ENCODE measurements at regions of chr4 and their contacts with region 1.

Region 1: DNA sequence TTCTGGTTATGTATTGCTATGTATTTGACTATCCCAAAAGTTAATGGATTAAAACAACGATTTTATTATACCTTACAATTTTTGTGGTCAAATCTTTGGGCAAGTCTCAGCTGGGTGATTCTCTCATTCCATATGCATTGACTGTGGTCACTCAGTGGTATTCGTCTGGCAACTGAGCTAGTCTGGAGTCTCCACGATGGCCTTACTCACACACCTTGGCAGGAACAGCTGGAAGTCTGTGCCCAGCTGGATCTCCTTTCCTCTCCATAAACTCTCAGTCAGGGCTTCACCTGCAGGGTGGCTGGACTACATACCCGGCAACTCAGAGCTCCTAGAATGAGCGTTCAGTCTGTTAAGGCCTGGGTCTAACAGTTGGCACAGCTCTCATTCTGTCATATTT is 141.1 kb upstream of the WDFY3 start:
- DNase-seq: no peak
- H3K4me3 ChIP-seq: no peak overlapping the region
- H3K27ac ChIP-seq: no peak overlapping the region
- H3K27me3 ChIP-seq: no peaks in the 10 kb centered on the region
- CTCF ChIP-seq: no peak

Region 2: GRCh38 chr4:85084380-85085094 is 23.0 kb before region 1 on chr4:
- CTCF ChIA-PET with region 1: interaction called, 11 read pairs
- POLR2A ChIA-PET with region 1: no interaction called
- DNase-seq: peak; percentile 42
- H3K4me3 ChIP-seq: no peak overlapping the region
- H3K27ac ChIP-seq: no peak overlapping the region
- H3K27me3 ChIP-seq: no peaks in the 10 kb centered on the region
- CTCF ChIP-seq: peak; percentile 79

Region 3: GRCh38 chr4:86286726-86287125 is 1179.2 kb after region 1 on chr4:
- CTCF ChIA-PET with region 1: no interaction called
- POLR2A ChIA-PET with region 1: no interaction called
- DNase-seq: no peak
- H3K4me3 ChIP-seq: no peak overlapping the region
- H3K27ac ChIP-seq: no peak overlapping the region
- H3K27me3 ChIP-seq: no peaks in the 10 kb centered on the region
- CTCF ChIP-seq: no peak

Measured in AG04450 (cell line).